Endothelial cell of umbilical vein (primary cell): ENCODE measurements at regions of chr3 and their contacts with region 1.

Region 1: GRCh38 chr3:113745273-113746068 is 578 bp downstream of the NAA50 start:
- DNase-seq: peak; percentile 93
- H3K4me3 ChIP-seq: peak overlapping the region; percentile 93 to 95 (median 95)
- H3K27ac ChIP-seq: peak overlapping the region; percentile 99
- H3K4me1 ChIP-seq: peaks cover 38% of the 10 kb centered on the region
- H3K27me3 ChIP-seq: no peaks in the 10 kb centered on the region
- CTCF ChIP-seq: peak; percentile 53 to 63
- POLR2A ChIP-seq: no peak

Region 2: DNA sequence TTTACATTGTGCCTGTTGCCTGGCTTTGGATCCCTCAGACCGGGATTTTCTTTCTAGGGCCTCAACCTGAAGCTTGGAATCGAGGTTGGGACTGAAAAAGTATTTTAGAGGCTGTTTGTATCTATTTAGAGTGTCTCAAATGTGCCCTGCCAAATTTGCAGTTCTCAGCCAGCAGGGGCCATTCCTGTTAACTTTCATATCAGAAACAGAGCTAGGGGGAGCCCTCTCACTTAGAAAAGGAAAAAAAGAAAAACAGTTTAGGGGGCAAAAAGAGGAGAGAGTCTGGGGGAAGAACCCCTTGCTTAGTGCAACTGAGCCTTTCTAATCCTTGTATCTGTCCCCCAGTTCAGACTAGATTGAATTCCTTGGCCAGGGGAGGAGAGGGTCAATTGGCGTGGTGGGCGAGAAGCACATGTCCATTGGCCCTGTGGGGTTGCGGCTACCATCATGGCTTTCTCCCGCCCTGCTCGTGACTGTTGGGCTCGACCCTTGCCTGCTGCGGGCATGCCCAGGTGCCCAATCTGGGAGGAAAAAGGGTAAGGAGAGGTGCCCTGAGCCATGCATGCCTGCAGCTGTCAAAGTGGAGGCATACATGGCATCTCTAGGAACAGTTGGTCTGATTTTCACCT is 405.7 kb before region 1 on chr3:
- CTCF ChIA-PET with region 1: no interaction called
- POLR2A ChIA-PET with region 1: no interaction called
- dilution Hi-C with region 1: no loop called
- intact Hi-C with region 1: no loop called
- DNase-seq: no peak
- H3K4me3 ChIP-seq: no peak overlapping the region
- H3K27ac ChIP-seq: no peak overlapping the region
- H3K4me1 ChIP-seq: no peaks in the 10 kb centered on the region
- H3K27me3 ChIP-seq: no peaks in the 10 kb centered on the region
- CTCF ChIP-seq: peak in 1 of 2 donors; percentile 7
- POLR2A ChIP-seq: no peak

Region 3: DNA sequence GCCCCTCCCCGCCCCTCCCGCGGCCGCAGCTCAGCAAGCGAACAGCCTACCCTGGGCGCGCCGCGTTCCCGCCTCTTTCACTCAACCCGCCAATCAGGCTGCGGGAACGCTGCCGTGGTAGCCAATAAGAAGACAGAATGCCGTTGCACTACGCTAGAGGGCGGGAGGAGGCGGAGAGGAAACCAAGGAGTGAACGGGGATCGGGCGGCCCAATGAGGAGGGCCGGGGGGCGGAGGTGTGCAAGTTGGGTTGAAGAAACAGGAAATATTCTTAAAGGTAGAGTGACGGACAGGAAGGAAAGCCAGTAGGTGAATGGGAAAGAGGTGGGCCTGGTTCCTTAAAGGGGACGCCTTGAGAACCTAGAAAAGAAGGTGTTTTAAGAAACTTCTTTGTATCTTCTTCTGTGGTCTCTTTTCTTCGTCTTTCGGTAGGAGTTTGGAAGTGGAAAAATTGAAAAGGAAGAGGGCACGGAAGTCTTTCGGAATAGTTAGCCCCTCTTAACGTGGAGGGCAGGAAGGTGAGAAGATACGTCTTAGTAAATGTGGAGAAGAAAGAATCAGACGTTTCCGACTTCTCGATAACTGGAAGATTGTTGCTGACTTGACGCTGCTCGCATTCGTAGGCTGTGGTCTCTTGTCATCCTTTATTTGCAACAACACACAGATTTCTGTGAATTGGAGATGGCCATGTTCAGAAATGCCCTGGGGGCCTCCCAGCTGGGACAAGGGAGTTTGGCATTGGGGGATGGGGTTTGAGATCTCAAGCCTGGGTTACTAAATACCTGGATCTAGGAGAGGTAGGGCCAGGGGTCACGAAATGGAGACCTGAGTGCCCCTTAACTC is 48.6 kb before region 1 on chr3:
- CTCF ChIA-PET with region 1: interaction called, 4 read pairs
- POLR2A ChIA-PET with region 1: interaction called, 9 read pairs
- dilution Hi-C with region 1: no loop called
- intact Hi-C with region 1: loop called (anchors 1 kb)
- DNase-seq: peak; percentile 100
- H3K4me3 ChIP-seq: peak overlapping the region; percentile 37 to 94 (median 90)
- H3K27ac ChIP-seq: peak overlapping the region; percentile 30
- H3K4me1 ChIP-seq: peaks cover 14% of the 10 kb centered on the region
- H3K27me3 ChIP-seq: no peaks in the 10 kb centered on the region
- CTCF ChIP-seq: peak in 1 of 2 donors; percentile 14
- POLR2A ChIP-seq: no peak

Region 4: GRCh38 chr3:113825090-113825489 is 79.6 kb after region 1 on chr3:
- CTCF ChIA-PET with region 1: interaction called, 9 read pairs
- POLR2A ChIA-PET with region 1: interaction called, 4 read pairs
- dilution Hi-C with region 1: no loop called
- intact Hi-C with region 1: loop called (anchors 1 kb)
- DNase-seq: peak; percentile 45
- H3K4me3 ChIP-seq: no peak overlapping the region
- H3K27ac ChIP-seq: no peak overlapping the region
- H3K4me1 ChIP-seq: peaks cover 10% of the 10 kb centered on the region
- H3K27me3 ChIP-seq: no peaks in the 10 kb centered on the region
- CTCF ChIP-seq: peak in 1 of 2 donors; percentile 20
- POLR2A ChIP-seq: no peak

Region 5: DNA sequence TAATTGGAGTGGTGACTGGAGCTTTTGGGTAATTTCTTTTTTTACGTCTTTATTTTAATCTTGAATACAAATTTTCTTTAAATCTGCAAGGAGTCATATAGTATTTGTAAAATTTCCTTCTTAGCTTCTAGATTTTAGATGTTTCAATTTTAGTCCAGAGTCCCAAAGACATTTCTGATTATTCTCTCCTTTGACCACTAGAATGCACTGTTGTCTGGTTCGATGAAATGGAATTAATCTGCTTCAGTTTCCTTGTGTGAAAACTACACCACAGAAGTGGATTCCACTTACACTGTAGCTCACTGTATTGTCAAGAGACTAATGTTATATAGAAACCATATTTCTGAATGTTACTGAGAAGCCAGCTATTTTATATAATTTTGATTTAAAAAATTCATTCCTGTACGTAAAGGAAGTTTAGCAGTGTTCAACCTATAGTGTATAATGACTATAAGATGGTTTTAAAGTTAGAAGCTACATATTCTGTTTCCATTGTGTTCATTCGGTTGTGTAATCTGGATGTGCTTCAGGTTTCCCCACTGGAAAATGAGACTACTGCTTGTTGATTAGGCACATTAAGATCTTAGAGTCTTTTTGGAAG is 99.3 kb after region 1 on chr3:
- CTCF ChIA-PET with region 1: interaction called, 12 read pairs
- POLR2A ChIA-PET with region 1: interaction called, 3 read pairs
- dilution Hi-C with region 1: no loop called
- intact Hi-C with region 1: no loop called
- DNase-seq: peak; percentile 63
- H3K4me3 ChIP-seq: no peak overlapping the region
- H3K27ac ChIP-seq: no peak overlapping the region
- H3K4me1 ChIP-seq: no peaks in the 10 kb centered on the region
- H3K27me3 ChIP-seq: no peaks in the 10 kb centered on the region
- CTCF ChIP-seq: peak; percentile 34 to 46
- POLR2A ChIP-seq: no peak

Region 6: DNA sequence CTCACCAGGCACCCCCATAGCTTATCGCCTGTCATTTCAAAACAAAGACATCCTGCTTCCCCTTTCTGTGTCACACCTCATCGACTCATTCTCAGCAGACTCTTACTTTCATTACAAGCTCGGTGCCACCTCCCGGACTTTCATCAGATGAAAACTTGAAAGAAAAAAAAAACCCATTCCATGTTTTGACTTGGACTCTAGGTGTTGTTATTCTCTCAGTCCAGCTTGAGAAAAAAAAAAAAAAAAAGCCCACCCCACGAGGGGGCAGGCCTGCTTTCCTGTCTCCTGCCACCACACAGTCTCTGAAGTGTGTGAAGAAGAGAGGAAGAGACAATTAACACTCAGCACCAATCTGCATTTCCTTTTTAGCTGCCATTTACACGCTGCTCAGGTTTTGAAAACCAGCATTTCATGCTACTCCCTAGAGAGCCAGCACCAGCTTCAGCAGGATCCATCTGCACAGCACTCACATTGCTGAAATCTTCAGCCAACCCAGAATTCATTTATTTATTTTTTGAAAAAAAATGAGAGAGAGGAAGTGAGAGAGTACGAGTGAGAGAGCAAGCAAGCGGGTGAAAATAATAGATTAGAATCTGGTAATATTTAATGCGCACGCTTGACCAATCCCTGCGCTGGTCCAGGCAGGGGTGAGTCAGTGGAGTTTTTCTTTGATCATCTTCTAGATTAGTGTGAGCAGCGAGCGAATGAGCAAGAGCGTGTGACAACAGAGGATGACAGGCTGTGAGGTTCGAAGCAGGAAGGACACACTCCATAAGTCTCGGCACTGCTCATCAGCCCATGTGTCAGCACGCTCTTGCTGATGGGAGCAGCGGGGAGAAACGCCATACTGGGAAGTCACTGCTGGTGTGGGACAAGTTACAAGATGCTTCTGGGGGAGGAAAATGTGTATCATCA is 468.4 kb after region 1 on chr3:
- CTCF ChIA-PET with region 1: no interaction called
- POLR2A ChIA-PET with region 1: no interaction called
- dilution Hi-C with region 1: no loop called
- intact Hi-C with region 1: loop called (anchors 2 kb)
- DNase-seq: peak; percentile 82
- H3K4me3 ChIP-seq: peak overlapping the region in 2 of 3 experiments; percentile 27 to 29
- H3K27ac ChIP-seq: peak overlapping the region; percentile 70
- H3K4me1 ChIP-seq: peaks cover 47% of the 10 kb centered on the region
- H3K27me3 ChIP-seq: no peaks in the 10 kb centered on the region
- CTCF ChIP-seq: no peak
- POLR2A ChIP-seq: no peak